Lower leg skin (tissue), 4 donors: ENCODE measurements at regions of chr18 and their contacts with region 1.

Region 1: DNA sequence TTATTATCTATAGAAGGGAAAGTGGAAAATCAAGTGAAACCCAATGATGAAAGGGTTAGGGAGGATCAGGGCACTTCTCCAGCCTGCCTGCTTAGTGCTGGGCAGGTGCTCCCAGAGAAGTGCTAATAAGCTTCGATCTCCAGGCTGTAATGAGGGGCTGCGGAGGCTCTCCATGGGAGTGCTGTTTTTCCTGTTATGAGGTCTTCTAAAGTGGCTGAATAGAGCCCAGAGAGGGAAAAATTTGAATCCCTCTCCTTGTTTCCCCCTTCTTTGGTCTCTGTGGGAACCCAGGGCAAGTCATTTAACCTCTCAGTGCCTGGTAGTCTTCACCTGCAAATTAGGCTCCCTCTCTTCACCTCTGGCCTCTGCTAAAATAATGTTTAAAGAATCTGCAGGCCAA is 351.7 kb upstream of the DCC start:
- DNase-seq: no peak
- H3K4me3 ChIP-seq: no peak overlapping the region
- CTCF ChIP-seq: no peak
- POLR2A ChIP-seq: no peak

Region 2: DNA sequence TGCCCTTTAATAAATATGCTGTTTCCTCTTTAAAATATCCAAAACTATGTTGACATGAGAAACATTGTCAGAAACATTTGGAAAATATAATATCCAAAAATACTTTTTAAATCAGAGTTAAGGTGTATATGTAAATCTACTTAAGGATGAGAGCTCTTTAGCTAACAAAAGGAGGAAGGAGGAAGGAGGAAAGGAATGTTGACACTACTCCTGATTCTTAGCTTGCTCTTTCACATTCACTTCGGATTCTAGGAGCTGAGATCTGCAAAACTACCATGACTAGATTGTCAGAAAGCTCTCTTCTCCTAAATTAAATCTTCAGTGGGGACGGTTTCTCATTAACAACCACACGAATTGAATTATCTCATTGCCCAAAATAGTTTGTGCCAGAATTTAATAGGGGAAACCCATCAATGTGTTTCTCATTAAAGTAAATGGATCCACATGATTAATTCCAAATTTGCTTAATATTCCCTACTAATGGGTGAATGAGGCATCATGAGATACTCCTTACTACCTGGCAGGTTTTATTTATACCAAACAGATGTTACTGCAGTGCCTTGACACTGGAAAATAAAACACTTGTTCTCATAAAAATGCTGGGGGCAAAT is 1727.1 kb after region 1 on chr18:
- intact Hi-C with region 1: loop called (anchors 5 kb)
- DNase-seq: no peak
- H3K4me3 ChIP-seq: no peak overlapping the region
- CTCF ChIP-seq: no peak
- POLR2A ChIP-seq: no peak